Activated T-helper 2 cell treated with anti-CD3 and anti-CD28 coated beads, Interferon-gamma antibody, Interleukin-2, Interleukin-4, amounts not matched to agents 10 μg/mL and 5 μg/mL and 100 μg/mL, durations not matched to agents 14 hours and 24 hours and 36 hours (primary cell): ENCODE measurements at regions of chr12 and their contacts with region 1.

Region 1: DNA sequence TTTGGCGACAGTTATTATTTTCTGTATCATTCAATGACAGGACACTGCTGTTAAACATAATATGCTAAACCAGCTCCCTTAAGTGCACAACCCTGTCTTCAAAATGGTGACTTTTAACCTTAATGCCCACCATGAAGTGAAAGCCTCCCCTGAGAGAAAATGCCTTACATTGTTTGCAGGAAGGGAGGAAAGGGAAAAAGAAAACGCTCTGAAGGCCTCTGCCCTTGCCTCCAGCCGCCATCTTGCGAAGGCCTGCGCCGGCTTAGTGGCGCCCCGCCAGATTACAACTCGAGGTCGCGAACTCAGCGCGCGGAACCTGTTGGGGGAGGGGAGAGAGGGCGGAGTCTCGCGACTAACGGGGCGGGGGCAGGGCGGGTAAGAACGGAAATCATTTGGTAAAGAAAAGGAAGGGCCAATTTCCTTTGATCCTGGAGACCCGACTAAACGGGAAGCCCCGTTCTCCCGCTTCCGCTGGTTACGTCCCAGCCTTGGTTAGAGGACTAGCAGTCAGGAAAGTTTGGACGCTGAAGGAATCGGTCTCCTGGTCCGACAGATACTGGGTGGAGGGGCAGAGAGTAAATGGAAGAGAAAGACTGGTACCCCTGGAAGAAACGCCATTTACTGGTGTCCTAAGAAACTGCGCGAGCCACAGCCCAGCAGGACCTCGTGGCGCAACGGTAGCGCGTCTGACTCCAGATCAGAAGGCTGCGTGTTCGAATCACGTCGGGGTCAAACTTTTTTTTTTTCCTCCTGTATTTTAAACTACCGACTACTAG is 11.6 kb upstream of the TMPO start:
- DNase-seq: peak; percentile 89
- H3K4me3 Mint-ChIP-seq: peak overlapping the region; percentile 96
- H3K27ac Mint-ChIP-seq: peak overlapping the region; percentile 99
- H3K4me1 Mint-ChIP-seq: peaks cover 33% of the 10 kb centered on the region
- H3K27me3 Mint-ChIP-seq: peaks cover 4% of the 10 kb centered on the region

Region 2: GRCh38 chr12:98453070-98453469 is 50.7 kb before region 1 on chr12:
- intact Hi-C with region 1: loop called (anchors 5 kb)
- DNase-seq: no peak
- H3K4me3 Mint-ChIP-seq: no peak overlapping the region
- H3K27ac Mint-ChIP-seq: no peak overlapping the region
- H3K4me1 Mint-ChIP-seq: peaks cover 11% of the 10 kb centered on the region
- H3K27me3 Mint-ChIP-seq: peaks cover 24% of the 10 kb centered on the region

Region 3: GRCh38 chr12:98490501-98491453 is 13.0 kb before region 1 on chr12:
- intact Hi-C with region 1: loop called (anchors 1 kb)
- DNase-seq: peak; percentile 72
- H3K4me3 Mint-ChIP-seq: peak overlapping the region; percentile 26
- H3K27ac Mint-ChIP-seq: peak overlapping the region; percentile 89
- H3K4me1 Mint-ChIP-seq: peaks cover 10% of the 10 kb centered on the region
- H3K27me3 Mint-ChIP-seq: peaks cover 2% of the 10 kb centered on the region

Region 4: GRCh38 chr12:98516184-98516873 is 12.5 kb after region 1 on chr12:
- intact Hi-C with region 1: loop called (anchors 1 kb)
- DNase-seq: peak; percentile 83
- H3K4me3 Mint-ChIP-seq: peak overlapping the region; percentile 92
- H3K27ac Mint-ChIP-seq: peak overlapping the region; percentile 98
- H3K4me1 Mint-ChIP-seq: peaks cover 22% of the 10 kb centered on the region
- H3K27me3 Mint-ChIP-seq: no peaks in the 10 kb centered on the region

Region 5: DNA sequence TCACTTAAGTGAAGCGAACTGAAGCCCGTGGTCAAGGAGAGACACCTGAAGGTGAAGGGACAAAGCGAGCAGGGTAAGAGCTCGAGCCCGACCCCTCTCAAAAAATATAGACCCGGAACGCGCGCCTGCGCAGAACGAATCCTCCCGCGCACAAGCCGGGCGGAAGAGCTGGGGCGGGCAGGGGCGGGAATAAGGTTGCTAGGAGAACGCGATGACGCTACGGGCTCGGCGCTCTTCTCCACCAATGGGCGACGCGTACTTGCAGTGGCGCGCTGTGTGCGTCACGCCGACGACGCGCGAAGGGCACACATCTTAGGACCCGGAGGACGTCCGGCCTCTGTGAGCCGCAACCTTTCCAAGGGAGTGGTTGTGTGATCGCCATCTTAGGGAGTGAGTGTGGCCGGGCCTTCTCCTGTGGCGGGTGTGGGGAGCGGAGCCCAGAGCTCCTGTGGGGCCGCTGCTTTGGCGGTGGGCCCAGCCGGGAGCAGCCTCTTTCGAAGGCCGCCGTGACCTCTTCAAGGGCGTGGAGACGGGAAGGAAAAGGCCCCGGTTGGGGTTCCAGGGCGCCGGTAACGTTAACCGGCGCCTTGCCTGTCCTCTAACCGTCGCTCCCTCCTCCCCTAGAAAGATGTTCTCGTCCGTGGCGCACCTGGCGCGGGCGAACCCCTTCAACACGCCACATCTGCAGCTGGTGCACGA is 89.7 kb after region 1 on chr12 and contains the start of gene SLC25A3:
- intact Hi-C with region 1: loop called (anchors 1 kb)
- DNase-seq: peak; percentile 92
- H3K4me3 Mint-ChIP-seq: peak within 1 kb of the TSS; percentile 91
- H3K27ac Mint-ChIP-seq: peak within 1 kb of the TSS; percentile 93
- H3K4me1 Mint-ChIP-seq: peaks cover 23% of the 10 kb centered on the region
- H3K27me3 Mint-ChIP-seq: no peaks in the 10 kb centered on the region
- total RNA-seq, gene SLC25A3: 619 and 622 TPM in 2 replicates

Region 6: GRCh38 chr12:98644711-98645402 is 141.1 kb after region 1 on chr12 and contains the starts of genes APAF1 and IKBIP:
- intact Hi-C with region 1: loop called (anchors 1 kb)
- DNase-seq: peak; percentile 94
- H3K4me3 Mint-ChIP-seq: peak within 1 kb of the TSS; percentile 97
- H3K27ac Mint-ChIP-seq: peak within 1 kb of the TSS; percentile 98
- H3K4me1 Mint-ChIP-seq: peaks cover 32% of the 10 kb centered on the region
- H3K27me3 Mint-ChIP-seq: no peaks in the 10 kb centered on the region
- total RNA-seq, gene APAF1: 28.3 and 31.2 TPM in 2 replicates
- total RNA-seq, gene IKBIP: 39.9 and 41.1 TPM in 2 replicates

Region 7: GRCh38 chr12:100266835-100267618 is 1763.2 kb after region 1 on chr12 and contains the starts of genes DEPDC4 and SCYL2:
- intact Hi-C with region 1: loop called (anchors 10 kb)
- DNase-seq: peak; percentile 89
- H3K4me3 Mint-ChIP-seq: peak within 1 kb of the TSS; percentile 95
- H3K27ac Mint-ChIP-seq: peak within 1 kb of the TSS; percentile 98
- H3K4me1 Mint-ChIP-seq: peaks cover 27% of the 10 kb centered on the region
- H3K27me3 Mint-ChIP-seq: no peaks in the 10 kb centered on the region
- total RNA-seq, gene DEPDC4: 1.7 and 1.8 TPM in 2 replicates
- total RNA-seq, gene SCYL2: 31.8 and 34.5 TPM in 2 replicates